CD4-positive, alpha-beta T cell (primary cell): ENCODE measurements at regions of chr11 and their contacts with region 1.

Region 1: DNA sequence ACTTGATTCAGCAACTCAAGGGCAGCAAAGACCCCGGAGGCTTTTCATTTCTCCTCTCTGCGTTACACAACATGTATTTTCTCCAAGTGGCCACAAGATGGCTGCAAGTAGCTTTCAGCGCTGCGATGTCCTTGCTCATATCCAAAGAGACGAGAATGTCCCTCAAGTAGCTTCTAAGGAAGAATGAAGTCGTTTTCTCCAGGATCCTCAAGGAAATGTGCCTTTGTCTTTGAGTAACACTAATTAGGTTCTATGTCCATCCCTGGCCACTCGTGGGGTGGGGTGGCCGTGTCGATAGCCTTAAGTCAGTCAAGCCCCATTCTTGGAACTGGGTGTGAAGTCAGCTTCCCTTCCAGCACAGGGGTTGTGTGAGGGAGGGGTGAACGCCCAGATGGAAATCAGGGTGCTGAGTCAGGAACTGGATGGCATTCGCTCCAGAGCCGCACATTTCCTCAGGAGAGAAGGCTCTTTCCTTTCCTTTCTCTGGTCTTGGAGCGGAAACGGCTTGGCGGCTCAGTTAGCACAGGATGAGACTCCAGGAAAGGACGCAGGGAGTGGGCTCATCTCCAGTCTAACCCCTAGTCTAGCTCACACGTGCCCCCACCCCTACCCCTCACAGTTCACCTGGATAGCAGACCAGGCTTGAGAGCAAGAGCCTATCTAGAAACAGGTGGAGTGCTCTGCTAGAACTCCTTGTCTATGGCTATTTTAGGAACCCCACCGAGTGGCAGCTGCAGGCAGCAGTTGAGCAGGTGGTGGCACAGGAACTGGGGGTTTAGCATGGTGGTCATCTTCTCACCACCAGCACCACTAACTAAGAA is 44.3 kb downstream of the NNMT start:
- DNase-seq: peak in 8 of 14 experiments; percentile 7 to 72 (median 28)
- ATAC-seq: peak; percentile 58
- H3K4me3 ChIP-seq: peak overlapping the region; percentile 40
- H3K4me3 Mint-ChIP-seq: peak overlapping the region; percentile 64
- H3K27ac ChIP-seq: no peak overlapping the region
- H3K27ac Mint-ChIP-seq: no peak overlapping the region
- H3K4me1 ChIP-seq: peaks cover 9% of the 10 kb centered on the region
- H3K4me1 Mint-ChIP-seq: peaks cover 13% of the 10 kb centered on the region
- H3K27me3 ChIP-seq: peaks cover 0 to 2% of the 10 kb centered on the region in 2 experiments
- H3K27me3 Mint-ChIP-seq: peaks cover 4% of the 10 kb centered on the region
- CTCF ChIP-seq: peak; percentile 78

Region 2: GRCh38 chr11:114439229-114440120 is 99.0 kb after region 1 on chr11 and contains the start of gene REXO2:
- CTCF ChIA-PET with region 1: no interaction called
- POLR2A ChIA-PET with region 1: no interaction called
- intact Hi-C with region 1: loop called in 1 of 2 experiments (anchors 10 kb)
- DNase-seq: peak; percentile 89 to 98 (median 93)
- ATAC-seq: peak; percentile 99
- H3K4me3 ChIP-seq: peak within 1 kb of the TSS; percentile 100
- H3K4me3 Mint-ChIP-seq: peak within 1 kb of the TSS; percentile 98
- H3K27ac ChIP-seq: peak within 1 kb of the TSS; percentile 35 to 49
- H3K27ac Mint-ChIP-seq: peak within 1 kb of the TSS; percentile 89
- H3K4me1 ChIP-seq: peaks cover 16% of the 10 kb centered on the region
- H3K4me1 Mint-ChIP-seq: peaks cover 36% of the 10 kb centered on the region
- H3K27me3 ChIP-seq: no peaks in the 10 kb centered on the region
- H3K27me3 Mint-ChIP-seq: no peaks in the 10 kb centered on the region
- CTCF ChIP-seq: peak; percentile 16
- total RNA-seq, gene REXO2: 17.3 to 20.6 TPM

Region 3: GRCh38 chr11:114610984-114611944 is 270.7 kb after region 1 on chr11:
- CTCF ChIA-PET with region 1: no interaction called
- POLR2A ChIA-PET with region 1: no interaction called
- intact Hi-C with region 1: loop called in 1 of 2 experiments (anchors 5 kb)
- DNase-seq: no peak
- ATAC-seq: no peak
- H3K4me3 ChIP-seq: no peak overlapping the region
- H3K4me3 Mint-ChIP-seq: no peak overlapping the region
- H3K27ac ChIP-seq: no peak overlapping the region
- H3K27ac Mint-ChIP-seq: no peak overlapping the region
- H3K4me1 ChIP-seq: no peaks in the 10 kb centered on the region
- H3K4me1 Mint-ChIP-seq: no peaks in the 10 kb centered on the region
- H3K27me3 ChIP-seq: no peaks in the 10 kb centered on the region
- H3K27me3 Mint-ChIP-seq: no peaks in the 10 kb centered on the region
- CTCF ChIP-seq: no peak

Region 4: DNA sequence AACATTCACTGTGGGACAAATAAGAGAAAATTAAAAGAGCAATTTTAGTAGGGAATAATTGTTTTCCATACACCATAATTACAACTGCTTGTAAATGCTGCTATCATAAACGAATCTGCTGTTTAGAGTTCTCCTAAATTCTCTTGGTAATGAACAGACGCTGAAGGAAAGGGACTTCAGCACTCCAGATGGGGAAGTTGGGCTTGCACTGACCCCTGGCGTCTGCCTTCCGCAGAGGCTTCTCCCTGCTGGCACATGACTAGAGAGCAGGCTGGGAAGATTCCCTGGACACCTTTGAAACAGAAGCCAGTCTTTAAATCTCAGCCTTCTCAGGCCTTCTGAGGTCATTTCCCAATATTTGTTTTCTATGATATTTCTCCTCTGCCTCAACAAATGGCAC is 421.9 kb after region 1 on chr11:
- CTCF ChIA-PET with region 1: no interaction called
- POLR2A ChIA-PET with region 1: no interaction called
- intact Hi-C with region 1: loop called (anchors 5 to 10 kb)
- DNase-seq: peak in 4 of 14 experiments; percentile 6 to 40 (median 19)
- ATAC-seq: no peak
- H3K4me3 ChIP-seq: no peak overlapping the region
- H3K4me3 Mint-ChIP-seq: no peak overlapping the region
- H3K27ac ChIP-seq: no peak overlapping the region
- H3K27ac Mint-ChIP-seq: no peak overlapping the region
- H3K4me1 ChIP-seq: no peaks in the 10 kb centered on the region
- H3K4me1 Mint-ChIP-seq: no peaks in the 10 kb centered on the region
- H3K27me3 ChIP-seq: peaks cover 0 to 5% of the 10 kb centered on the region in 2 experiments
- H3K27me3 Mint-ChIP-seq: peaks cover 35% of the 10 kb centered on the region
- CTCF ChIP-seq: no peak